WTC11 (cell line): ENCODE measurements at regions of chr6 and their contacts with region 1.

Region 1: GRCh38 chr6:44593539-44593944 is 206.0 kb downstream of the CDC5L start:
- DNase-seq: peak; percentile 81
- ATAC-seq: peak; percentile 93
- H3K4me3 Mint-ChIP-seq: no peak overlapping the region
- H3K27ac Mint-ChIP-seq: 0 out of 2 replicates have a peak overlapping the region, but pooled peaks have one; percentile 62
- H3K4me1 Mint-ChIP-seq: peaks cover 9% of the 10 kb centered on the region
- H3K27me3 Mint-ChIP-seq: peaks cover 6% of the 10 kb centered on the region; the same call in 1 of the 2 replicates
- CTCF ChIP-seq: peak; percentile 60

Region 2: DNA sequence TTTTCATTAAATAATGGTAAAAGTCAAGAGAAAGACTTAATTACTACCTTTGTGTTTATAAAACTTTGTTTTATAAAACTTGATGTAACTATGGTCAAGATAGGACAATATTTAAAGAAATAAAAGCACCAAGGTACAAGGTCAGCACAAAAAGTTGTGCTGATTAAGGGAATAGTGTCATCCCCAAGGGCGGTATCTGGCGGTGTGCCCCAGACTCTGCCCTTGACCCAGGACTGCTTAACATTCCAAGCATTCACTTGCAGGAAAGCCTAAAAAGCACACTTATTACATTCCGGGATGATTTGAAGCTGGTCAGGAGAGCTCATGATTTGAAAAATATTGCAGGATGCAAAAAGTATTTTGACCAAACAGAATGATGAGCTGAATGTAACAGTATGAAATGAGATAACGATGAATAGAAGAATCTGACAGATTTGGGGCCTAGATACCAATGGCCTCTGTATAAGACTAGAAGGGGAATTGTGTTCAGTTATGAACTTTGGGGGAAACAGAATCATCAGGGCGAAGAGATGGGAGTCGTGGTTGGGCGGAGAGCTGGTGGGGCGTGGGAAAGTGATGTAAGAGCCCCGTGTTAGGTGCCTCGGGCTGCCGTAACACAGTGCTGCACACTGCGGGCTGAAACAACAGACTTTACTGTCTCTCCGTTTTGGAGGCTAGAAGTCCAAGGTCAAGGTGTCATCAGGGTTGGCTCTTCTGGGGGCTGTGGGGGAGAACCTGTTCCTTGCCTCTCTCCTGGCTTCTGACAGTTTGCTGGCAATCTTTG is 128.8 kb before region 1 on chr6:
- CTCF ChIA-PET with region 1: interaction called, 17 read pairs
- POLR2A ChIA-PET with region 1: no interaction called
- DNase-seq: no peak
- ATAC-seq: peak; percentile 73
- H3K4me3 Mint-ChIP-seq: no peak overlapping the region
- H3K27ac Mint-ChIP-seq: no peak overlapping the region
- H3K4me1 Mint-ChIP-seq: peaks cover 5% of the 10 kb centered on the region
- H3K27me3 Mint-ChIP-seq: no peaks in the 10 kb centered on the region; the same call in 1 of the 2 replicates
- CTCF ChIP-seq: no peak

Region 3: DNA sequence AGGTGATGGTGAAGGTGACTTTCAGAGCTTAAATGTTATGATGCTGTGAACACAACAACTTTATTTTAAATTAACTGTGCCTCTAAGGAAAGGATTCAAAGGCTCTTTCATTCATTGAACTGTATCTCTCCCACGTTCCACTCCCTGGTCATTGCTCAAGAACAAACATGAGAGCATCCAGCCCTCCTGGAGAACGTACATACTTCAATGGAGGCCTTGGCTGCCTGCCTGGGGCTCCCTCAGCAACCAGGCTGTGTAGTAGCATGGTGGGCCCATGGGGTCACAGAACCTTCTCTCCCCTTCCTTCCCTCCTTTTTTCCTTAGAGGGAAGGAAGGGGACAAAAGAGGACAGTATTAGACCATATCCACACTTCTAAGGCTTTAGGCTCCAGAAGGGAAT is 28.3 kb after region 1 on chr6:
- CTCF ChIA-PET with region 1: interaction called, 18 read pairs
- POLR2A ChIA-PET with region 1: interaction called, 5 read pairs
- DNase-seq: no peak
- ATAC-seq: no peak
- H3K4me3 Mint-ChIP-seq: no peak overlapping the region
- H3K27ac Mint-ChIP-seq: no peak overlapping the region
- H3K4me1 Mint-ChIP-seq: peaks cover 62% of the 10 kb centered on the region
- H3K27me3 Mint-ChIP-seq: peaks cover 8% of the 10 kb centered on the region
- CTCF ChIP-seq: no peak

Region 4: GRCh38 chr6:44833248-44833647 is 239.7 kb after region 1 on chr6:
- CTCF ChIA-PET with region 1: no interaction called
- POLR2A ChIA-PET with region 1: no interaction called
- DNase-seq: no peak
- ATAC-seq: no peak
- H3K4me3 Mint-ChIP-seq: no peak overlapping the region
- H3K27ac Mint-ChIP-seq: no peak overlapping the region
- H3K4me1 Mint-ChIP-seq: peaks cover 45% of the 10 kb centered on the region
- H3K27me3 Mint-ChIP-seq: no peaks in the 10 kb centered on the region
- CTCF ChIP-seq: no peak